AG04449 (cell line): ENCODE measurements at regions of chr3 and their contacts with region 1.

Region 1: DNA sequence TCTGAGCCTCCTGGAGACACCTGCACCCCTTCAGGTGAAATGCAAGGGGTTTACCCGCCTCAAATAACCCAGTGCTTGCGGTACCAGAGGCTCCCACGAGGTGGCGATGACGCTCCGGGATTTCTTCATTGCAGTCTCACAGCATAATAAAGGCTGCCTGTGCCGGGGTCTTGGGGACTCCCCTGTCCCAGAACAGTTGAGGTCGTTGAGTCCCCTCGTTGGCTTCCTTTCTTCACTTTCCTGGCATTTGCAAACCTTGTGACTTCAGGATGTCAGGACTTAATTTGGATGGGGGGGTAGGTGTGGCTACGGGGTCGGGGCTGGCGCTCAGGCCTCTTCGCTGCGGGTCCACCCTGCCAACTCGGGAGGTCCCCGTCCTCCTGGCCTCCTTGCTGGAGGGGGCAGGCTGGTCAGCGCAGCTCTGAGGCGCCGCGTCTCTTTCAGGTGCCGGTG is 1.3 kb downstream of the GNAT1 start:
- DNase-seq: no peak
- H3K4me3 ChIP-seq: no peak overlapping the region
- CTCF ChIP-seq: peak; percentile 84

Region 2: DNA sequence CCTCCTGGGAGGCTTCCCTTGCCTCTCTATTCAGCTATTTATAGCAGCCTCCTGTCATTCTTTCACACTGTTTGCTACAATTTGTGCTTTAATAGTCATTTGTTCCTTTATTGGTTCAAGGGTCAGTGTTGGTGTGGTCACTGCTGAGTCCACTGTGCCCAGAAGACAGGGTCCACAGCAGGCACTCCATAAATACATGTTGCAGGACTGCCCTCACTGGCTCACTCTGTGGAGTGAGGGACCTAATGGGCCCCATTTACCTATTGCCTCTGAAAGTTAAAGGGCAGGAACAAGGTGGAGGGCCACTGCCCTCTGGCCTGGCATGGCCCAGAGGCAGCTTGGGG is 305.8 kb before region 1 on chr3:
- CTCF ChIA-PET with region 1: no interaction called
- POLR2A ChIA-PET with region 1: no interaction called
- DNase-seq: no peak
- H3K4me3 ChIP-seq: no peak overlapping the region
- CTCF ChIP-seq: no peak

Region 3: GRCh38 chr3:50163572-50164455 is 28.9 kb before region 1 on chr3:
- CTCF ChIA-PET with region 1: interaction called, 283 read pairs
- POLR2A ChIA-PET with region 1: no interaction called
- DNase-seq: peak; percentile 65
- H3K4me3 ChIP-seq: no peak overlapping the region
- CTCF ChIP-seq: no peak

Region 4: GRCh38 chr3:50235716-50236496 is 43.2 kb after region 1 on chr3 and contains the start of gene GNAI2:
- CTCF ChIA-PET with region 1: interaction called, 1,029 read pairs
- POLR2A ChIA-PET with region 1: no interaction called
- DNase-seq: peak; percentile 82
- H3K4me3 ChIP-seq: peak within 1 kb of the TSS; percentile 83
- CTCF ChIP-seq: no peak

Region 5: GRCh38 chr3:50260027-50260941 is 67.6 kb after region 1 on chr3:
- CTCF ChIA-PET with region 1: interaction called, 303 read pairs
- POLR2A ChIA-PET with region 1: no interaction called
- DNase-seq: no peak
- H3K4me3 ChIP-seq: peak overlapping the region; percentile 57
- CTCF ChIP-seq: peak; percentile 94

Region 6: DNA sequence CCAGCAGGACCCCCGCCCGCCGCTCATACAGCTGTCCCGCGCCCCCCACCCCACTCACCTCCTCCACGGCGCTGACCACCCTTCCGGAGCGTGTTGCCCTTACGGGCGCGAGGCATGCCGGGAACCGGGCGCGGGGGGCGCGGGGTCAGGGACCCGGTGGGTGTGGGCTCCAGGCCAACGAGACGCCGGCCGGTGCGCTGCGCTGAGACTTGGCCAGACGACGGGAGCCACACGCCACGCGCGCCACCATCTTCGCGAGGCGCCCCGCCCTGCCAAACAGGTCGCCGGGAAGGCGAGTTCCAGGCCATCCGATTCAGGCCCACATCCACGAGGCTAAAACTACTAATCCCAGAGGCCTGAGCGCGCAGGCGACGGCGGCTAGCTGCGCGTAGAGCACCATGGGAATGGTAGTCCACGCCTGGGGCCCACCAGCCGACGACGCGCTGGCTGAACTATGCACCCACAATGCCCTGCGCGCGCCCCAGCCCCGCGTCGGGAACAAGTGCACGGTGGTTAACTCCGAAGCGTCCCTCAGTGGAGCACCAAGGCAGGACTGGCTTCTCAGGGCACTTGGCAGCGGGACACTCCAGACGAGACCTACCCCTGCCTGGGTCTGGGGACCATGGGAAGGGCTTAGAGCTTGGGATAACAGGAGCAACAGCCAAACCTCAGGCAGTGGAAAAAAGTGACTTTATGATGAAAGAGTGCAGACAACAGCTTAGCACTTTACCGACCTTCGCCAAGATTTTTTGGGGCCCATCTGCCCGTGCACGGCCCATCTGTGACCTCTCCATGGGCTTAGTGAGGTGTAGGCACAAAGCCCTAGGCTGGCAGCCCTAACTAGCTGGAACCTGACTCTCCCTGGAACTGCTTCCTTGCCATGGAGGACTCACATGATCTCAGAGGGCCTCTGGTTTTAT is 99.7 kb after region 1 on chr3 and contains the start of gene IFRD2:
- CTCF ChIA-PET with region 1: interaction called, 31 read pairs
- POLR2A ChIA-PET with region 1: no interaction called
- DNase-seq: peak; percentile 79
- H3K4me3 ChIP-seq: peak within 1 kb of the TSS; percentile 87
- CTCF ChIP-seq: no peak

Region 7: DNA sequence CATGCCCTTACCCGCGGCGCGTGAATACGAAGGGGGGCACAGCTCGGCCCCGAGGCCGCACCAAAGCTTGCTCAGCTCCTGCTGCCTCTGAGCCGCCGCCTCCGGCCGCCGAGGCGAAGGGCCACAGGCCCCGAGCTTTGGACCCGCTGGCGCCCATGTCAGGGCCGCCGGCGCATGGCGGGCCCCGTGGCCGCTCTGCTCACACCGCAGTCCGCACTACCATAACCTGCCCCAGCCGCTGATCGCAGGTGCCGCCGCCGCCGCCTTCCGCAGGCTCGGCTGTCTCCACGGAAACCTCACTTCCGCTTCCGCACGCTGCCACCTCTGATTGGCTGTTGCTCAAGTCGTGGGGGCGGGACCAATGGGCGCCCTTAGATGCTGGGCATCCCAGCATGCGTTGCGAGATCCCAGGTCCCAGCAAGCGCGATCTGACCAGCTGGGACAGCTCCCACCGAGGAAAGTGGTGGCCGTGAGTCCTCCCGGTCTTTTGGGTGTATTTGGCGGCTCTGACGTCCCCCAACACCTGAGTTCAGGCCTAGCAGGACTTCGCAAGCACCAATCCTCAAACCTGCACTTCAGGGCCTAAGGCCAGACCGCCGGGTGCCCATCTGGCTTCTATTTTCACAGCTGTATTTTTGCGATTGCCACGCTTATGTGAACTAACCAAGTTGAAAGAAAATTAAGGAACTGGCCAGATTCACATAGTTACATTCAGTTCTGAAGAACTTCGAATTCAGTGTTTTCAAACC is 135.4 kb after region 1 on chr3 and contains the start of gene TUSC2:
- CTCF ChIA-PET with region 1: interaction called, 32 read pairs
- POLR2A ChIA-PET with region 1: no interaction called
- DNase-seq: peak; percentile 64
- H3K4me3 ChIP-seq: peak within 1 kb of the TSS; percentile 83
- CTCF ChIP-seq: no peak

Region 8: DNA sequence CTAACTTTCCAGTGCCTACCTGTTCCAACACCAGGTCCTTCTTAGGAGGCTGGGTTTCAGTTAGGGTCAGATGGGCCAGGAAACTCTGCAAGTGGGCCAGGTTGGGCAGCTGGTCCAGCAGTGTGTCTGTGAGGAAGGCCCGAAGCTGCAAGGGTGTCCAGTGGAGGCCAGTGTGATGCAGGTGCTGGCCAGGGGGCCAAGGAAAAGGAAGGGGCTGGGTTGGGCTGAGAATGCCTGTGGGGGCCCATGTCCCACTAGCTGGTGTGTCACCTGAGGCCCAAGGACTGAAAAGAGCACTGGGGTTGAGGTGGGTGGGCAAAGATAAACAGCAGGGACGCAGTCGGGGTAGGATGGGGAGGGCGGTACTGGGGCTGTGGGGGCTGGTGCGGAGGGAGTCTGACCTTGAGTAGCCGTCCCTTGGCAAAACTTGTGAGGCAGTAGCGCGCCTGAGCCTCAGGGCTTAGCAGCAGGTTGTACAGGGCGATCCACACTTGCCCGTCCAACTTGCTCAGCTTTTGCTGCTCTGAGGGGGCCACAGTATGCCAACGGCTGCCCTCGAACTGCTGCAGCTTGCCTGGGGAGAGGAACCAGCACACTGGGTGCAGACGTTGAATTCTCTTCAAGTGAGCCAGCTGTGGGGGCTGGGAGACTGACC is 149.4 kb after region 1 on chr3:
- CTCF ChIA-PET with region 1: no interaction called
- POLR2A ChIA-PET with region 1: no interaction called
- DNase-seq: no peak
- H3K4me3 ChIP-seq: no peak overlapping the region
- CTCF ChIP-seq: no peak